Activated T-helper 1 cell treated with anti-CD3 and anti-CD28 coated beads, Interleukin-12 subunit alpha, Interleukin-12 subunit beta, Interleukin-2, Interleukin-4 antibody, amounts not matched to agents 30 ng/mL and 10 ng/mL and 1 ng/mL, durations not matched to agents 14 hours and 24 hours and 36 hours (primary cell): ENCODE measurements at regions of chr17 and their contacts with region 1.

Region 1: GRCh38 chr17:74873038-74873873 is 462 bp upstream of the FDXR start:
- DNase-seq: peak; percentile 98
- H3K4me3 Mint-ChIP-seq: peak overlapping the region; percentile 89
- H3K27ac Mint-ChIP-seq: peak overlapping the region; percentile 87
- H3K4me1 Mint-ChIP-seq: peaks cover 31% of the 10 kb centered on the region
- H3K27me3 Mint-ChIP-seq: peaks cover 5% of the 10 kb centered on the region

Region 2: GRCh38 chr17:74776044-74776977 is 96.9 kb before region 1 on chr17 and contains the start of gene NAT9:
- intact Hi-C with region 1: loop called (anchors 1 kb)
- DNase-seq: peak; percentile 99
- H3K4me3 Mint-ChIP-seq: peak within 1 kb of the TSS; percentile 99
- H3K27ac Mint-ChIP-seq: peak within 1 kb of the TSS; percentile 91
- H3K4me1 Mint-ChIP-seq: peaks cover 70% of the 10 kb centered on the region
- H3K27me3 Mint-ChIP-seq: no peaks in the 10 kb centered on the region
- total RNA-seq, gene NAT9: 69.0 and 70.8 TPM in 2 replicates

Region 3: DNA sequence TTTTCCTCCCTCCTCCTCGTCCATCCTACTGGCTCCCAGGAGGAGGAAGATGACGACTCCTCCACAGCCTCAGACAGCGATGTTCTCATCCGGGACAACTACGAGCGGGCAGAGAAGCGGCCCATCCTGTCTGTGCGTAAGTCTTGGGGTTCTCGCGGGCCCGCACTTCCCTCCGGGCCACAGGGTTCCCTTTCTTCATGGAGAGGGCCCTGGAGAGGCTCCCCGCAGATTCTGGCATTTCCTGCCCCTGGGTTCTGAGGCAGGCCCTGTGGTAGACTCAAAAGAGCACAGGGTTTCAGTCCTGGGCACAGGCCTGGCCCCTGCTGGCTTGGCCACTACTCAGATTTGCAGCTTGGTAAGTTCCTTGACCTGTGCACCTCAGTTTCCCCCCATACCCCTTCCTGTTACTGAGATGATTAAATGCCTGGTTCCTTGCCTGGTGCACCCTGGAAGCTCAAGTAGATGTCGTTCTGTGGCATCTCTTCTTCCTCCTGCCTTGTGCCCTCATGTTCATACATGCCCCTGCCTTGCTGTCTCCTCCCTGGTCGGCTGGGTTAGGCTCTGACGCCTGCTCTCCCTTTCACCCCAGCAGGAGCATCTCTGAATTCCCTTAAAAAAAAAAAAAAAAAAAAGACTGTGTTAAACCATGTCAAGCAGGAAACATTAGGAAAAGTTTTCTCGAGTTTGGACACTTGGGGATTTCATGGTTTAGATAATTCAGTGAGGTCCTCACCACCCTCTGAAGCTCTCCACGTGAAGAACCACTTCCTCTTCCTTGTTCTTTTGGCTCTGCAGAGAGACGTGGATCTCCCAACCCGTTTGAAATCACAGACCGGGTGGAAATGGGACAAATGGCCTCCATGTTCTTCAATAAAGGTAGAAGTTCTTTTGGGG is 82.8 kb before region 1 on chr17:
- intact Hi-C with region 1: loop called (anchors 2 kb)
- DNase-seq: no peak
- H3K4me3 Mint-ChIP-seq: no peak overlapping the region
- H3K27ac Mint-ChIP-seq: peak overlapping the region; percentile 47
- H3K4me1 Mint-ChIP-seq: peaks cover 39% of the 10 kb centered on the region
- H3K27me3 Mint-ChIP-seq: no peaks in the 10 kb centered on the region

Region 4: GRCh38 chr17:74852237-74853047 is 20.8 kb before region 1 on chr17:
- intact Hi-C with region 1: loop called (anchors 1 kb)
- DNase-seq: peak; percentile 72
- H3K4me3 Mint-ChIP-seq: peak overlapping the region; percentile 86
- H3K27ac Mint-ChIP-seq: peak overlapping the region; percentile 52
- H3K4me1 Mint-ChIP-seq: peaks cover 11% of the 10 kb centered on the region
- H3K27me3 Mint-ChIP-seq: peaks cover 19% of the 10 kb centered on the region

Region 5: DNA sequence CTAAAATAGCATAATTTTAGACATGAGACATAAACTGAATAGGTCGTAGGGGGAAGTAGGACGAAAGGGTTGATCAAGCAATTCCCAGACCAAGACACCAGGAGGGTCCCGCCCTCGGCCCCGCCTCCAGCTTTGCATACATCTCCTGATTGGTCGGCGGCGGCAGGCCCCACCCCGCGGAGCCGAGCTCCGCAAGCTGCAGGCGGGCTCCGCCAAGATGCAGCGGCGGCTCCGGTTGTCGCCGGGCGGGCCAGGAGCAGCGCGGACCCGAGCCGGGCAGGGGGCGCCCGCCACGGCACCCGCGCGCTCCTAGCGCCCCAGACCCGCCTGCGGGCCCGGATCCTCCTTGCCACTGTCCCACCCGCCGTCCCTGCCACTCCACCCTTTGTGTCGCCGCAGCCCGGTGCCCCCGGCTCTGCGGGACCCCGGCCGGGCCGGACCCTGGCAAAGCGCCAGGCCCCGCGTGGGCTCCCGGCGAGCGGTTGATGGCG is 114.2 kb after region 1 on chr17 and contains the start of gene CDR2L:
- intact Hi-C with region 1: loop called (anchors 1 kb)
- DNase-seq: peak; percentile 89
- H3K4me3 Mint-ChIP-seq: peak within 1 kb of the TSS; percentile 83
- H3K27ac Mint-ChIP-seq: no peak within 1 kb of the TSS
- H3K4me1 Mint-ChIP-seq: peaks cover 7% of the 10 kb centered on the region
- H3K27me3 Mint-ChIP-seq: peaks cover 54% of the 10 kb centered on the region
- total RNA-seq, gene CDR2L: 1.1 and 1.3 TPM in 2 replicates

Region 6: DNA sequence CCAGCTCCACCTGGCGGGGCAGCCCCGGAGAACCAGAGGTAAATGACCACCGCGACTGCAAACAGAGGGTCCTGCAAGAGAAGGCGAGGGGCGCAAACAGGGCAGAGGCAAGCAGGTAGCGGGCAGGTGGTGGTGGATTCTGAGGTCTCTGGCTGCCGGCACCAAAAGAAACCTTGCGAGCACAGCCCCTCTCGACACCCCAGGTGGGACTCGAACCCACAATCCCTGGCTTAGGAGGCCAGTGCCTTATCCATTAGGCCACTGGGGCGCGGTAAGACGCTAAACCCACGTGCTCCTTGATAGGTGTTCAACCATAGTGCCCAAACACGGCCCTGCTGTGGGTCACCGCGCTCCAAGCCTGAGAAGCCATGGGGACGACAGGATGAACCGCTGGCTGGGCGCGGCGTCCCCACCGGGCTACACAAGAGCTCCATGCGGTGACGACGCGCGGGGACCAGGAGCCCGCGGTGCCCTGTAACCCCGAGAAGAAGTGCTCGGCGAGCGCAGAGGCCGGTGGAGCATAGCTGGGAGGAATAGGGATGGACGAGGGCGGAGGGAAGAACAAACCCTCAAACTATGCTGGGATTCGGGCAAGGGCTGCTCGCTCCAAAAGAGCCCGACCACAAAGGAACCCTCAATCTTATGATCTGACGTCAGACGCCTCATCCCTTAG is 161.1 kb after region 1 on chr17:
- intact Hi-C with region 1: loop called (anchors 5 kb)
- DNase-seq: peak; percentile 79
- H3K4me3 Mint-ChIP-seq: peak overlapping the region; percentile 93
- H3K27ac Mint-ChIP-seq: peak overlapping the region; percentile 94
- H3K4me1 Mint-ChIP-seq: peaks cover 52% of the 10 kb centered on the region
- H3K27me3 Mint-ChIP-seq: peaks cover 10% of the 10 kb centered on the region